Ascending aorta (tissue), 2 donors: ENCODE measurements at regions of chr15 and their contacts with region 1.

Region 1: DNA sequence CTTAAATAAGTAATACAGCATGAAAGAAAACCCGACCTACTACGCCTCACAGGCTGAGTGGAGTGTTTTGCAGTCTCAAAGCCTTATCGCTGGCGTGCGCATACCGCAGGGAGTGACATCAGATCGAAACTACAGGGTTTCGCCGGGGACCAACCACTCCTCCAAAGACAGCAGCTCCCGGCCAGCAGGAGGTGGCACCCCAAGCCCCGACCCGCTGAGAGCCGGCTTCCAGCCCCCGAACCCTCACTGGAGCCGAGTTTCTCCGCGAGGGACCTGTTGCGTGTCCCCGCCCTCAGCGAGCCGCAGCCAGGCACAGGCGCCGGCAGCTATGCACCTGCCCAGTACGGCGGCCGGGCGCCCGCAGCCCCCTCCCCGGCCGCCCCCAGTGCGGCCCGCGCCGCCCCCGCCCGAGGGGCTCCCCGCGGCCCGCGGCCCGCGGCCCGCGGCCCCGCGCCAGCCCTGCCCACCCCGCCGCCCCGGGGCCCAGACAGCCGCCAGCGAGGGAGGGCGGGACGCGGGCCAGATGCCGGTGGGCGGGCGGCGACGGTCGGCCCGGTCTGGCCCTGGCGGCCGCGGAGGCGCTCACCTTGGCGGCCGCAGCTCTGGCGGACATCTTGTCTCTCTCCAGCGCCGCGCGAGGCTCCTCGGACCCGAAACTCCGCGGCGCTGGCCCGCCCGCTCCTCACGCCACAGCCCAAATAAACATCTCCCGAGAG is 694 bp downstream of the TJP1 start:
- DNase-seq: peak in 1 of 2 donors; percentile 91
- H3K4me3 ChIP-seq: peak overlapping the region; percentile 77 to 96
- H3K27ac ChIP-seq: peak overlapping the region; percentile 98 to 99
- H3K4me1 ChIP-seq: peaks cover 0 to 5% of the 10 kb centered on the region in 2 donors
- H3K27me3 ChIP-seq: no peaks in the 10 kb centered on the region
- CTCF ChIP-seq: peak in 1 of 3 experiments; percentile 19

Region 2: DNA sequence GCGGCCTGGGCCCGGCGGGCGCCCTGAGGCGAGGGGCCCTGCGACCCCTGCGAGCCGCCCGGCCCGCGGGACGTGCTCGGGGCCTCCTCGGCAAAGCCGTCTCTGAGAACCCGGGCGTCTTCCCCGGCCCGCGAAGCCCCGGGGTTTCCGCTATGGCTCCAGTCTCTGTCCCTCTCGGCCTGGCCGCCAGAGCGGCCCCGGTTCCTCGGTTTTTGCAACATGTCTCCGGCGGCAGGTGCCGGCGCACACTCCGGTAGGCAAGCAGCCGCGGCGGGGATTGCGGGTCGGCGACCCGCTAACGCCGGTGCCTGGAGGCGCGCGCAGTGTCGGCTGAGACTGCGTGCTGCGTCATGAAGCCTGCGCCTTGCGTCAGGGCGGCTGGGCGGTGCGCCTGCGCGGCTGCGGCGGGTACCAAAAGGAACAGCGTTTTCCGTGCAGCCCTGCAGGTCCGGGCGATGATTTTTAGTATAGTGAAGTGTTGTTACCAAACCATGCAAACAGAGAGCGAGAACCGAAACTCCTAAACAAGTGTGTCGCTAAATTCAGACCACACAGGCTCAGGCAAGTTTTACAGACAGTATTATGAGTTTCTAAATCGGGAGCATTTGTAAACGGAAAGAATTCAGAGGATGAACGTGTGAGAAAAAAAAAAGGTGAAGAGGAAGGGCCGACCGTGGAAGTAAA is 551.9 kb before region 1 on chr15 and contains the start of gene NSMCE3:
- intact Hi-C with region 1: loop called (anchors 5 kb)
- DNase-seq: peak; percentile 52 to 93
- H3K4me3 ChIP-seq: peak within 1 kb of the TSS; percentile 75
- H3K27ac ChIP-seq: peak within 1 kb of the TSS; percentile 81 to 82
- H3K4me1 ChIP-seq: peaks cover 3 to 11% of the 10 kb centered on the region in 2 donors
- H3K27me3 ChIP-seq: no peaks in the 10 kb centered on the region
- CTCF ChIP-seq: no peak
- total RNA-seq, gene NSMCE3: 21.6 TPM

Region 3: GRCh38 chr15:29674661-29675533 is 146.7 kb before region 1 on chr15:
- intact Hi-C with region 1: loop called (anchors 5 kb)
- DNase-seq: peak in 1 of 2 donors; percentile 69
- H3K4me3 ChIP-seq: peak overlapping the region; percentile 57 to 90
- H3K27ac ChIP-seq: no peak overlapping the region
- H3K4me1 ChIP-seq: peaks cover 0 to 3% of the 10 kb centered on the region in 2 donors
- H3K27me3 ChIP-seq: no peaks in the 10 kb centered on the region
- CTCF ChIP-seq: no peak

Region 4: DNA sequence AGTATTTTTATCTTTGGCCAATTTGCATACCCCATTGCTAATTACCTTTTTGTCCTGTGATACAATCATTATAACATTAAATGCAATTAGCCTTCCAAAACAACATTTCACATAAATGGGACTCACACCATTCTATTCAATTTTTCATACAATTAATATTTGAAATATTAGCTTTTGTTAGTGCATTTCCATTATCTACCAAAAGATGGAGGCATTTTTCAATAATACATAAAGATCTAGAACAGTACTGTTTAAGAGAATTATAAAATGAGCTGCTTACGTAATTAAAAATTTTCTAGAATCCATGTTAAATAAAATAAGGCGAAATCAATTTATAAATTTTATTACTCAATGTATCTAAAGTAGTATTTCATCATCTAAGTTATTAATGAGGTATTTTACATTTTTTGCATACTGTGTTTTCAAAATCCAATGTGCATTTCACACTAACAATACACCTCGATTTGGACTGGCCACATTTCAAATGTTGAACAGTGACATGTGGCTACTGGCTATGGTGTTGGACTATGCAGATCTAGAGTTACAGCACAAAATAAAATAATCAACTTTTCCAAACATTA is 73.6 kb before region 1 on chr15:
- intact Hi-C with region 1: loop called (anchors 5 kb)
- DNase-seq: no peak
- H3K4me3 ChIP-seq: no peak overlapping the region
- H3K27ac ChIP-seq: no peak overlapping the region
- H3K4me1 ChIP-seq: no peaks in the 10 kb centered on the region
- H3K27me3 ChIP-seq: no peaks in the 10 kb centered on the region
- CTCF ChIP-seq: peak; percentile 13 to 53 (median 43)

Region 5: DNA sequence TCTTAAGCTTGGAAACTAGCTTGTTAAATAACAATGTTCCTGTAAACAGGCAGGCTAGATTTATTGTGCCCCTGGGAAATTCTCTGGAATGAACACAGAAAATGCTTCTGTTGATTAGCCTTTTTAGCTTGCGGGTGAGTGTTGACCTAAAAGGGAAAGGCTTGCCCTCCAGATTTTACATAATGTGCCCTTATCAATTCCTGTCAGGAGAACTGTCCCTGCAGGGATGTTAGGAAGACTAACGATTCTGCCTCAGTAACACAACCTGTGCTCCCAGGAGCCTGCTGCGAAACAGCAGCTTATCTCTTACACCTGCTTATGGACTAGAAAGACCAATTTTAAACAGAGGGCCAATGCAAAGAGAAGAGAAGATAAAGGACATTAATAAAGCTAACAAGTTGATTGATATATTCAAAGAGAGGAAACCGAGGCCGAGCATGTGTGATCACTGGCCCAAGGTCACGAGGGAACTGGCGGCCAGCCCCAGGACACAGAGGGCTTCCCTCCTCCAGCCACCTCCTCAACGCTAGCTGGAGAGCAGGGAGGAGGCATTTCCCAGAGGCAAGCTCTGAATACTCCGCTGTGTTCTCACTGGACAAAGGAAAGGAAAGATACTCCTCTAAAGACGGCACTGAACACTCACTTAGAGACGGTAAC is 49.0 kb after region 1 on chr15:
- intact Hi-C with region 1: loop called (anchors 1 kb)
- DNase-seq: no peak
- H3K4me3 ChIP-seq: peak overlapping the region in 1 of 2 donors; percentile 23
- H3K27ac ChIP-seq: peak overlapping the region; percentile 71 to 75
- H3K4me1 ChIP-seq: peaks cover 0 to 11% of the 10 kb centered on the region in 2 donors
- H3K27me3 ChIP-seq: no peaks in the 10 kb centered on the region
- CTCF ChIP-seq: no peak

Region 6: DNA sequence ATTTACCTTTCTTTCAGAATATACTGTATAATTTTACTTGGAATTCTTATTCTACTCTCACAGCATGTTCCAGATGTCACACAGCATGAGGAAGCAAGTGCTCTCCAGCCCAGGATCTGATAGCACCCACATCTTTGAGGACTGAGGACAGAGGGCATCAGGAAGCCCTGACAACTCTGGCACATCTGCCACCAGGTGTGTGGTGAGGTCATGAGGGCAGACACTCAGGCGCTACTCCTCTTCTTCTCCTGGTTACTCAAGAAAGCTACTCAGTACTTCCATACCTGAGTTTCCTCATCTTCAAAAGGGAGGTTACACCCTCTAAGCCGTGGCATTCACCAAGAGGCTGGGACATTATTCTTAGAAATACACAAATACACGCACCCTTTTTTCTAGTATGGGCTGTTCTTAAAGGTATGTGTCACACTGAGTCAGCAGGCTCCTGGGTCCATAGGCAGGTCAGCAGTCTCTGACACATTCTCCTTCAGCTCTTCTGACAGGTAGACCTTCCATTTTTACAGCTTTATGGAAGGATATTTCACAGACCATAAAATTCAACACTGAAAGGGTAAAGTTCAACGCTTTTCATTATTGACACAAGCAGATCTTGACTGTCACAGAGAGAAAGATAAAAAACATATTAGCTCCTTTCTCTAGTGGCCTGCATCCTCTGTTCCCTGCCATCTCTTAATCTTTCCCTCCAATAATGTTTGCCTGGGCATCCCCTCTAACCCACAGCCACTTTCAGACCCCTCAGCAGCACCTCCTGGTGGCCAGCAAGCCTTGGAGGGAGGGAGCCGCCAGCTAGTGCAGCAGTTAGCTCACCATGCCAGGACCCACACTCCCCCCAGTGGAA is 103.9 kb after region 1 on chr15:
- intact Hi-C with region 1: loop called (anchors 2 kb)
- DNase-seq: peak in 1 of 2 donors; percentile 71
- H3K4me3 ChIP-seq: no peak overlapping the region
- H3K27ac ChIP-seq: peak overlapping the region; percentile 37 to 46
- H3K4me1 ChIP-seq: peaks cover 3 to 5% of the 10 kb centered on the region in 2 donors
- H3K27me3 ChIP-seq: no peaks in the 10 kb centered on the region
- CTCF ChIP-seq: peak; percentile 55 to 63 (median 62)